Colonic mucosa (tissue), 4 donors: ENCODE measurements at regions of chr9 and their contacts with region 1.

Region 1: GRCh38 chr9:77521091-77521490 is 127.0 kb downstream of the GNA14 start:
- DNase-seq: no peak
- H3K4me3 ChIP-seq: no peak overlapping the region
- H3K27ac ChIP-seq: no peak overlapping the region
- H3K4me1 ChIP-seq: no peaks in the 10 kb centered on the region
- H3K27me3 ChIP-seq: no peaks in the 10 kb centered on the region
- CTCF ChIP-seq: no peak

Region 2: DNA sequence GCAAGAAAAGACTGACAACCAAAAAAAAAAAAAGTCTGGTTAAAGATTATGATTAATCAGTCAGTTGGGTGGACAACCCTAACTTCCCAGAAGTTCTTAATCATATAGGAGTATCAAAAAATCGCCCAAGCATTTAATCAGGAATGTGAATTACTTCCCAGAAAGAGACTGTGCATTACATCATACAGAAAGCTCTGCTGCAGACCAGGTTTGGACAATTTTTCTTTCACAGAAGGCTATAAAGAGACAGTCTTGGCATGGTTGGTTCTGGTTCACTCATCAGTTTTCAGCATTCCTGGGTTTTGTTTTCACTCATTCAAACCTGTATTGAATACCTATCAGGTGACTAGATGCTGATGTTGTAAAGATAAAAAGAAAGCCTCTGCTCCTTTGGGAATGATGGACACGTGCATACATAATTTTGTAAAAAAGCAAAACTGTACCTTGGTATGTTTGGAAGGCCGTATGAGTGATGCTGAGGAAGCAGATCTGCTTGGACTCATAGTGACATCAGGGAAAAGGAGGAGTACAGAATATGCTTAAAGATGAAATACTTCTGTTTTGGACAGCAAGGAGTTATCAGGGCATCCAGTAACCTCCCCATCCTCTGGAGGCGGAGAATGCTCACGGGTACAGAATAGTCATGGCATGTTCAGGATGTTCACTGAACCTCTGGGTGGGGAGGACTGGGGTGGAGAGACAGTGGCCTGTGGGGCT is 51.4 kb before region 1 on chr9:
- intact Hi-C with region 1: loop called (anchors 5 kb)
- DNase-seq: no peak
- H3K4me3 ChIP-seq: no peak overlapping the region
- H3K27ac ChIP-seq: no peak overlapping the region
- H3K4me1 ChIP-seq: no peaks in the 10 kb centered on the region
- H3K27me3 ChIP-seq: no peaks in the 10 kb centered on the region
- CTCF ChIP-seq: no peak

Region 3: GRCh38 chr9:77588271-77588937 is 67.3 kb after region 1 on chr9:
- intact Hi-C with region 1: no loop called
- DNase-seq: no peak
- H3K4me3 ChIP-seq: no peak overlapping the region
- H3K27ac ChIP-seq: peak overlapping the region; percentile 87
- H3K4me1 ChIP-seq: peaks cover 2% of the 10 kb centered on the region
- H3K27me3 ChIP-seq: no peaks in the 10 kb centered on the region
- CTCF ChIP-seq: no peak

Region 4: DNA sequence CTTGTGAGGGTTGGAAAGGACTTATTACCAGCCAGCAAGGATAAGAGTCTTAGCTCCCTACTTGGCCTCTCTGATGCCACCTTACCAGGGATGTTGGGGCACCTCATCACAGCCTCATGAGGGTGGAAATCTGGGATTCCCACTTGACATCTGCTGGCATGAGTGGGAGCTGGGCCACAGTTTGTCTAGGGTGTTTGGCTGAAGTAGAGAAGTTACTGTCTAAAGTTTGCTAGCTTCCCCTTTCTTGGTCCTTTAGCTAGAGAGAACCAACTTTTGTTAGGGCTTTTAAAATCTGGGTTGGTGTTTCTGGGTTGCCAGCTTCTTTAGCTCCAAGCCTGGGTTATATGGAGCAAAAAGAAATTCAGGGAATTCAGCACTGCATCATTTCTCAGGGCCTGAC is 184.5 kb after region 1 on chr9:
- intact Hi-C with region 1: no loop called
- DNase-seq: no peak
- H3K4me3 ChIP-seq: no peak overlapping the region
- H3K27ac ChIP-seq: no peak overlapping the region
- H3K4me1 ChIP-seq: no peaks in the 10 kb centered on the region
- H3K27me3 ChIP-seq: no peaks in the 10 kb centered on the region
- CTCF ChIP-seq: no peak

Region 5: DNA sequence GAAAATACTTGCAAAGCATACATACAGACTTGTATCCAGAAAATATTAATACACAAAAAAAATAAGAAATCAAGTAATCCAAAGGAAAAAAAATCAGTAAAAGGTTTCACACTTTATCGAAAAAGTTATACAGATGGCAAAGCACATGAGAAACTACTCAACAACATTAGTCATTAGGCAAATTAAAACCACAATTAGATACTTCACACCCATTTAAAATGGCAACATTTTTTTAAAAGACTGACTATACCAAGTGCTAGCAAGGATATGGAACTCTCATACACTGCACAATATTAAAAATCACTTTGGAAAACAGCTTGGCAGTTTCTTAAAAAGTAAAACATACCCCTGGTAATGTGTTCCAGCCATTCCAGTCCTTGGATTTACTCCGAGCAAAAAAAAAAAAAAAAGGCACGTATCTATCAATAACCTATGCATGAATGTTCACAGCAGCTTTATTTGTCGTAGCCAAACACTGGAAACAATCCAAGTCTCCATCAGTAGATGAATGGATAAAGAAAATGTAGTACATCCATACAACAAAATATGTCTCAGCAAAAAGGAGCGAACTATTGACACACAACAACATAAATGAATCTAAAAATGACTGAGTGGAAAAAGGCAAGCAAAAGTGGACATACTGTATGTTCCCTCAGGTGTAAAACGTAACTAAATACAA is 444.5 kb after region 1 on chr9:
- intact Hi-C with region 1: no loop called
- DNase-seq: no peak
- H3K4me3 ChIP-seq: no peak overlapping the region
- H3K27ac ChIP-seq: no peak overlapping the region
- H3K4me1 ChIP-seq: no peaks in the 10 kb centered on the region
- H3K27me3 ChIP-seq: no peaks in the 10 kb centered on the region
- CTCF ChIP-seq: no peak